K562 (cell line): ENCODE measurements at regions of chr14 and their contacts with region 1.

Region 1: DNA sequence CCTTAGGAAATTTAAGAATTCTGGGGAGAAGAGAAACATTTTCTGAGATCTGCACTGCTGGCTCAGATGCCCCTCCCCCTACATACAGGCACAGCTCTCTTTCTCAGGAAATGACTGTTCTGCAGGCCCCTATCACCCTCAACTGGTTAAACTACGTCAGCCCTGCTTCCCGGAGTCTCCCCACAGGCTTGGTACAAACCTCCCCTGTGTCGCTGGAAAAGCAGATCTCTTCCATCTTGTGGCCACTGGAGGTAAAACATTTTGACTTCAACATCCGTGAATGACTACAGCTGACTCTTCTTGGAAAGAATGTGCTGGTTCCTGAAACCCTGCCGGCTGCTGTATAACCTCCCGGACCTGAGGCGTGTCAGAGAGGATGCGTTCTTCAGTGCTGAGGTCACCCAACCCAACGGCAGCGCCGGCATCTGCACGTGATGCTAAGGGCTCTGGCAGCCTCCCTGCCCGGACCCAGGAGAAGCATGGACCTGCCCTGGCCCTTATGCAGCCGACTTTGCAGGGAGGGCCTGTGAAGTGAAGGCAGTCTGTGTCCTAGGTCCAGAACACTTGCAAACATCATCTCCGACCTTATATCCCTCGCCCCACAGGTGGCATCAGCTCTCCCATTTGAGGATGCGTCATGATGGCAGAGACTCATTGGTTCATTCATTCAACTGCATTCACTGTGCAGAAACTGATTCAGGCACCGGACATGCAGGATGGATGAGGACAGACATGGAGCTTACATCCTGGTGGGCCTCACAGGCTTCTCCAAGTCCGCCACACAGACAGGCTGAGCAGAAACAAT is 129.3 kb downstream of the GCH1 start:
- DNase-seq: peak; percentile 80 to 94 (median 87)
- ATAC-seq: peak; percentile 96
- H3K4me3 ChIP-seq: peak overlapping the region; percentile 6; the same call in 1 of the 2 replicates
- H3K27ac ChIP-seq: peak overlapping the region; percentile 86
- H3K4me1 ChIP-seq: peaks cover 19 to 23% of the 10 kb centered on the region in 2 experiments; a peak in 4 of 5 replicates
- H3K27me3 ChIP-seq: no peaks in the 10 kb centered on the region
- CTCF ChIP-seq: peak; percentile 75 to 89 (median 89)
- EP300 ChIP-seq: peak; percentile 76
- POLR2A ChIP-seq: no peak
- RAD21 ChIP-seq: peak; percentile 70 to 92

Region 2: GRCh38 chr14:54509546-54510501 is 263.5 kb before region 1 on chr14 and contains the start of gene CGRRF1:
- CTCF ChIA-PET with region 1: no interaction called
- POLR2A ChIA-PET with region 1: no interaction called
- in situ Hi-C with region 1: no loop called
- intact Hi-C with region 1: loop called (anchors 5 kb)
- DNase-seq: peak; percentile 91 to 95 (median 92)
- ATAC-seq: peak; percentile 99
- H3K4me3 ChIP-seq: peak within 1 kb of the TSS; percentile 92
- H3K27ac ChIP-seq: peak within 1 kb of the TSS; percentile 55; the same call in 2 of the 3 replicates
- H3K4me1 ChIP-seq: peaks cover 2 to 10% of the 10 kb centered on the region in 2 experiments; a peak in 2 of 5 replicates
- H3K27me3 ChIP-seq: no peaks in the 10 kb centered on the region
- CTCF ChIP-seq: peak; percentile 44 to 60 (median 46)
- EP300 ChIP-seq: peak; percentile 8; the same call in 1 of the 2 replicates
- POLR2A ChIP-seq: peak; percentile 52; the same call in 1 of the 2 replicates
- RAD21 ChIP-seq: peak; percentile 9 to 24; a peak in 1 of 4 replicates
- polyA plus RNA-seq, gene CGRRF1: 13.5 to 15.8 TPM

Region 3: DNA sequence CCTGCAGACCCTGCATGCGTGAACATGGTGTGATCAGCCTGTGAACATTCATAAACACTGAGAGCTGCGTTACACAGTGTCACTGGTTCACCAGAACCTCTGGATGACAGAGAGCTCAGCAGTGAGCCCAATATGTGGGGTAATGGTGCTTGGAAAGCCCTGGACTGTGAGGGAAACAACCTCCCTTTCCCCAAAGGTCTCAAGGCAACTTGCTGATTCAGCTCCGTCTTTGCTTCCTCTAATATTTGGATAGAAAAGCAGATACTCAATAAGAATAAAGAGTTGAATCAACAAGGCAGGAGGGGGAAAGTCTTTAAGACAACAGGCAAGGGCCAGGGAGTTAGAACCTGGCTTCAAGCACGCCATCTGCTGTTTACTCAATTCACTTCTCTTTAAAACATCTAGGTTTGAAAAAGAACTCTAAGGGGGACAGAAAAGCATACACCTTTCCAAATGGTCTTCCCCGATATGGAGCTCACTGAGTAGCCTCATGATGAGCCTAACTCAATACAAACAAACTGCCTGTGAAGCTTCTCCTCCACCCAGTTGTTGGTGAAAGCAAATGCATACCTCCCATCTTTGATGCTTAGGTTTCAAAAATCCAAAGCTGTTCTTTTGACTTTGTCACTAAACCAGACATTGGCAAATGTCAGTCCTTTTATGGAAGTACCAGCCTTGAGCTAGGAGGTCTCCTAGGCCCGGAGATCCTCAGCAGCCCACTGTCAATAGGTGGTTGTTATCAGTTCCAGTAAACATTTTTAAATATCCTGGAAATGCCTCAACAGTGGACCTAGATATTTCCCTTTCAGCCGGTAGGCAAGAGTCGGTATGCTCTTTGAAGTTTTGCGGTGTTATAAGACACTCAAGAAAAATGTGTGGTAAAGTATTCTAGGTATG is 130.3 kb before region 1 on chr14:
- CTCF ChIA-PET with region 1: no interaction called
- POLR2A ChIA-PET with region 1: no interaction called
- in situ Hi-C with region 1: no loop called
- intact Hi-C with region 1: loop called (anchors 5 kb)
- DNase-seq: peak in 1 of 4 experiments; percentile 27
- ATAC-seq: peak; percentile 72
- H3K4me3 ChIP-seq: no peak overlapping the region
- H3K27ac ChIP-seq: no peak overlapping the region
- H3K4me1 ChIP-seq: no peaks in the 10 kb centered on the region
- H3K27me3 ChIP-seq: no peaks in the 10 kb centered on the region
- CTCF ChIP-seq: peak in 2 of 3 experiments; percentile 34 to 46; a peak in 2 of 6 replicates
- EP300 ChIP-seq: no peak
- POLR2A ChIP-seq: no peak
- RAD21 ChIP-seq: peak; percentile 28 to 49; a peak in 3 of 4 replicates

Region 4: GRCh38 chr14:54728700-54729527 is 44.5 kb before region 1 on chr14:
- CTCF ChIA-PET with region 1: no interaction called
- POLR2A ChIA-PET with region 1: interaction called, 5 read pairs
- in situ Hi-C with region 1: no loop called
- intact Hi-C with region 1: loop called (anchors 1 kb)
- DNase-seq: peak in 1 of 4 experiments; percentile 70
- ATAC-seq: peak; percentile 76
- H3K4me3 ChIP-seq: peak overlapping the region; percentile 50
- H3K27ac ChIP-seq: peak overlapping the region; percentile 89
- H3K4me1 ChIP-seq: peaks cover 0 to 27% of the 10 kb centered on the region in 2 experiments; a peak in 4 of 5 replicates
- H3K27me3 ChIP-seq: no peaks in the 10 kb centered on the region
- CTCF ChIP-seq: no peak
- EP300 ChIP-seq: peak; percentile 80
- POLR2A ChIP-seq: peak; percentile 53; the same call in 1 of the 2 replicates
- RAD21 ChIP-seq: no peak